Left ventricle myocardium inferior (tissue), 1 donor: ENCODE measurements at regions of chr1 and their contacts with region 1.

Region 1: GRCh38 chr1:235075188-235075926 is 53.3 kb downstream of the TOMM20 start:
- DNase-seq: peak; percentile 74
- H3K4me3 ChIP-seq: peak overlapping the region; percentile 36
- H3K27ac ChIP-seq: peak overlapping the region; percentile 94
- H3K4me1 ChIP-seq: peaks cover 90% of the 10 kb centered on the region
- H3K27me3 ChIP-seq: no peaks in the 10 kb centered on the region
- CTCF ChIP-seq: no peak

Region 2: GRCh38 chr1:234599617-234600417 is 475.5 kb before region 1 on chr1:
- intact Hi-C with region 1: loop called (anchors 5 kb)
- DNase-seq: peak; percentile 92
- H3K4me3 ChIP-seq: peak overlapping the region; percentile 87
- H3K27ac ChIP-seq: peak overlapping the region; percentile 100
- H3K4me1 ChIP-seq: peaks cover 65% of the 10 kb centered on the region
- H3K27me3 ChIP-seq: no peaks in the 10 kb centered on the region
- CTCF ChIP-seq: no peak

Region 3: DNA sequence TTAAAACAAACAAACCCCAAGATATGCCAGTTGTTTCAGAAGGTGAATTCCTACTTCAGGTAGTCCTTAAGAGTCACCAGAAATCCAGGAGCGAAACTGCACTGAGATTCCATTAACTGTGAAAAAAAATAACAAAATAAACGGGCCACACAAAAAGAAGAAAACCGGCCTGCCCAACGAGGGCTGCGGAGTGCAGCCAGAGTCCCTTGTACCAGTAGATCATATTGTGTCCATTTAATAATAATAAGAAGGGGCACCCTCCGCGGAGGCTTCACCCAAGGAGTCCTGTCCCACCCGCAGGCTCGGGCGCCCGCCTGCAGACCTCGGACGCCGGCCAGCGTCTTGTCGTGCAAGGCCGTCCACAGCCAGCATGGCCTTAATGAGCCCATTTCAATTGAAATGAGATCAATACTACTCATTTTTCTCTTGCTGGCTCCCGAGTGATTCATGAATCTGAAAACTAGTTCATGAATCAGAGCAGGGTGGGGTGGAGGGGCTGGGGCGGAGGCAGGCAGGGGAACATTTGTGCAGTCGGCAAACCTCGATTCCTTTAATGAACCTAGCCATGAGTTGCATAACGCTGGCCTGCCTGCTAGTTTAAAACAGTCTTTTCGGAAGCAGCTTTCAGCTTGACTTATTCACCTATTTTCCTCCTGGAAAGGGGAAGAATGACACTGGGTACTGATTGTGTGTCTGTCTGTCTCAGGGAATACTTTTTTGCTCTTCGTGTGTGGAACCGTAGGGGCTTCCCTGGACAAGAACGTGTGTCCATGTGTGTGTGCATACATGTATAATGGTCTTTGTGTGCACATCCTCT is 352.2 kb before region 1 on chr1:
- intact Hi-C with region 1: loop called (anchors 5 kb)
- DNase-seq: peak; percentile 67
- H3K4me3 ChIP-seq: peak overlapping the region; percentile 41
- H3K27ac ChIP-seq: peak overlapping the region; percentile 99
- H3K4me1 ChIP-seq: peaks cover 96% of the 10 kb centered on the region
- H3K27me3 ChIP-seq: no peaks in the 10 kb centered on the region
- CTCF ChIP-seq: no peak

Region 4: DNA sequence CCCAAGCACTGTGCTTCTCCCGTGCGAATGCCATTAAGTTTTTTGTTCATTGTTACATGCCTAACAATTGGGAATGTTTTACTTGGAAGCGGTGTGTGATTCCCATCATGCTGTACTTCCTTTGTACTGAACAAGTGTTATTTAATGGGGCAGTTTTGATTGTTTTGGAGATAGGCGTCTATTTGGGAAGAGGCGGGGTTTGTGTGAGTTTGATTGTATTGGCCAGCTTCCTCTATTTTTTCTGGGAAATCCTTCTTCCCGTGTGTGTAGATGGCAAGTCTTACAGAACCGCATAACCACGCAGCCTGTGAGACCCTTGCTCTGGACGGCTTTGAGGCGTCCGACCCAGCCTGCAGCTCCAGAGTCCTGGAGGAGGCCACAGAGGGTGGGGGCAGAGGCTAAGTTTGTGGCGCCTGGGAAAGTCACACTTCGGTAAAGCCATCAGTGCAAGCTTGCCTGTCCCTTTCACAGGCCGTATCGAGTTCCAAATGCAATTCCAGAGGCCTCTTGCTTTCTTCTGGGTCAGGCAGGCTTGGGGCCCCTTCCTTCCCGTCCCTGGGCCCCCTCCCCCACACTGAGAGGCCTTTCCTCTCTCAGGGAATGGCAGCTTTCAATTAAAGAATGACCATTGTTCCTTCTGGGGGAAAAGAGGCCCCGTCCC is 157.0 kb before region 1 on chr1:
- intact Hi-C with region 1: loop called (anchors 5 kb)
- DNase-seq: peak; percentile 38
- H3K4me3 ChIP-seq: peak overlapping the region; percentile 25
- H3K27ac ChIP-seq: peak overlapping the region; percentile 97
- H3K4me1 ChIP-seq: peaks cover 89% of the 10 kb centered on the region
- H3K27me3 ChIP-seq: no peaks in the 10 kb centered on the region
- CTCF ChIP-seq: no peak

Region 5: GRCh38 chr1:234961456-234962339 is 113.7 kb before region 1 on chr1:
- intact Hi-C with region 1: no loop called
- DNase-seq: no peak
- H3K4me3 ChIP-seq: peak overlapping the region; percentile 18
- H3K27ac ChIP-seq: peak overlapping the region; percentile 87
- H3K4me1 ChIP-seq: peaks cover 71% of the 10 kb centered on the region
- H3K27me3 ChIP-seq: no peaks in the 10 kb centered on the region
- CTCF ChIP-seq: no peak

Region 6: GRCh38 chr1:234997896-234998741 is 77.2 kb before region 1 on chr1:
- intact Hi-C with region 1: loop called (anchors 2 kb)
- DNase-seq: peak; percentile 70
- H3K4me3 ChIP-seq: peak overlapping the region; percentile 52
- H3K27ac ChIP-seq: peak overlapping the region; percentile 97
- H3K4me1 ChIP-seq: peaks cover 34% of the 10 kb centered on the region
- H3K27me3 ChIP-seq: no peaks in the 10 kb centered on the region
- CTCF ChIP-seq: no peak